ENCODE measurements at regions of chr2 and their contacts with region 1.

Region 1: GRCh38 chr2:236663287-236664101 is 93.9 kb downstream of the ACKR3 start:
- DNase-seq: peak in 1 of 2 experiments; percentile 25
- H3K4me3 ChIP-seq: no peak overlapping the region
- H3K27ac ChIP-seq: no peak overlapping the region
- H3K4me1 ChIP-seq: peaks cover 29% of the 10 kb centered on the region
- H3K27me3 ChIP-seq: peaks cover 8% of the 10 kb centered on the region
- CTCF ChIP-seq: no peak

Region 2: GRCh38 chr2:236434593-236434992 is 228.9 kb before region 1 on chr2:
- CTCF ChIA-PET with region 1: no interaction called
- POLR2A ChIA-PET with region 1: no interaction called
- intact Hi-C with region 1: no loop called
- DNase-seq: no peak
- H3K4me3 ChIP-seq: no peak overlapping the region
- H3K27ac ChIP-seq: no peak overlapping the region
- H3K4me1 ChIP-seq: no peaks in the 10 kb centered on the region
- H3K27me3 ChIP-seq: peaks cover 5% of the 10 kb centered on the region; the same call in 1 of the 2 replicates
- CTCF ChIP-seq: no peak

Region 3: DNA sequence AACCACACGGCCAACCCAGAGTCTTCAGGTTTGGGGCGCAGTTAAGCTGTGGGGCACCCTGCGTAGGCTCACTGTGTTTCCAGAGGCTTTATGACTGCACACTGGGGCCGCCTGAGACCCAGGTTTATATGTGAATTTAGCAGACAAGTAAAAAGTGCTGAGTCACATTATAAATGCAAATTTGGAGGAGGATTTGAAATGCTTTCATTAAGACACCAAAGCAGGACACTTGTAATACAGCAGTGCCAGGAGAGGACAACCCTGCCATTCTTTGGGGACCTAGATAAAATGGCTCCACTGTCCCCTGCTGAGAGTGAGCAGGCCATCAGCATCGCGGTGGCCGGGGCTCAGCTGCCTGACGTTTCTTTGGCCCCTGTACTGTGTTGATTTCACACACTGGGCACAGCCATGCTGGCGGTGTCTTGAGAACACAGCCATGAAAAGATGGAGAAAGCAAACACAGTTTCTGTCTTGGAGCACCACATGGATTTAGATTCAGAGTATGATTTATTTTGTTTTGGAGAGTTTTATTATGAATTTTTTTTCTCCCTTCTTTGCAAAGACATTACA is 83.7 kb before region 1 on chr2:
- CTCF ChIA-PET with region 1: no interaction called
- POLR2A ChIA-PET with region 1: no interaction called
- intact Hi-C with region 1: no loop called
- DNase-seq: no peak
- H3K4me3 ChIP-seq: no peak overlapping the region
- H3K27ac ChIP-seq: no peak overlapping the region
- H3K4me1 ChIP-seq: no peaks in the 10 kb centered on the region
- H3K27me3 ChIP-seq: peaks cover 62% of the 10 kb centered on the region
- CTCF ChIP-seq: no peak

Region 4: DNA sequence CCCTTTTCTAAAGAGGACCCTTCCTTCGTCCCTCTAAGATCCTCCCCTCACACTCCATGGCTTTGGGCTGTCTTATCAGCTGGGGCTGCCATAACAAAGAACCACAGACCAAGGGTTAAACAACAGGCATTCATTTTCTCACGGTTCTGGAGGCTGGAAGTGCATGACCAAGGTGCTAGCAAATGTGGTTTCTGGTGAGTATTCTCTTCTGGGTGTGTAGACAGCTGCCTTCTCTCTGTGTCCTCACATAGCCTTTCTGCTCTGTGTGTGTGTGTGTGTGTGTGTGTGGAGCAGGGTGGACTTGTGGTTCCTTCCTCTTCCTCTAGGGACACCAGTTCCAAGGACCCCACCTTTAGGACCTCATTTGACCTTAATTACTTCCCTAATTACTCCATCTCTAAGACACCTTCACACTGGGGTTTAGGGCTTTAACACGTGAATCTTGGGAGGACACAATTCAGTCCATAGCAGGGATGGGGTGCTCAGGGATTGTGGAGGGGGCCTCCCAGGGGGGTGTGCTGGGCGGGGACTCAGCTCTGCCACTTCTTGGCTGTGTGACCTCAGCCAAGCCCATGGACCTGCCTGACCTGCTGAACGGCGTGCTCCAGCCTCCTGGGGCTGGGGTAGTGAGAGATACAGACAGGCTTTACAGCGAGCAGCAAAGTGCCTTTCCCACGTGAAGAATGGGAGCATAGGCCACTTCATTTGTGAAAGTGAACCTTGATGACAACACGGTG is 55.9 kb before region 1 on chr2:
- CTCF ChIA-PET with region 1: no interaction called
- POLR2A ChIA-PET with region 1: interaction called, 12 read pairs
- intact Hi-C with region 1: no loop called
- DNase-seq: peak; percentile 64 to 65
- H3K4me3 ChIP-seq: no peak overlapping the region
- H3K27ac ChIP-seq: no peak overlapping the region
- H3K4me1 ChIP-seq: peaks cover 18% of the 10 kb centered on the region
- H3K27me3 ChIP-seq: peaks cover 40% of the 10 kb centered on the region
- CTCF ChIP-seq: peak; percentile 56

Region 5: DNA sequence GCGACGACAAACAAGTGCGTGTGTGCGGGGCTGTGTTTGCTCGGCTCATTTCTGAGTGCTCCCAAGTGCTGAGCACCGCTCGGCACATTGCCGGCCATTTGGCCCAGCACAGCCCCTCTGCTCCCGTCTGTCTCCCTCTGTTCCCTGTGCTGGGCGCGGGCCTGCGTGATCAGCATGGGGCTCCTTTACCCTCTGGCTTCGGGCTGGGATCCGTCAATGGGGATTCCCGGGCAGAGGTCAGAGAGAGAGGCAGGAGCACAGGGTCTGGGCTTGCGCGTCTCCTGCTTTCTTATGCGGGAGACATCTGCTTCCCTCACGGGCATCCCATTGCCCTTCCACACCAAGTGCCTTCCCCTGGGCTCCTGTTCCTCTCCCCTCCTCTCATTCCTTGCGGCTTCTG is 140.1 kb after region 1 on chr2:
- CTCF ChIA-PET with region 1: no interaction called
- POLR2A ChIA-PET with region 1: no interaction called
- intact Hi-C with region 1: no loop called
- DNase-seq: no peak
- H3K4me3 ChIP-seq: no peak overlapping the region
- H3K27ac ChIP-seq: no peak overlapping the region
- H3K4me1 ChIP-seq: no peaks in the 10 kb centered on the region
- H3K27me3 ChIP-seq: peaks cover 15% of the 10 kb centered on the region; the same call in 1 of the 2 replicates
- CTCF ChIP-seq: no peak

Measured in PC-9 (cell line).